ENCODE measurements at regions of chr16 and their contacts with region 1.

Region 1: GRCh38 chr16:27203429-27204231 is at the start of gene KDM8:
- DNase-seq: peak; percentile 99
- ATAC-seq: peak; percentile 91 to 95
- H3K4me3 ChIP-seq: peak within 1 kb of the TSS; percentile 67 to 79 (median 76)
- H3K27ac ChIP-seq: peak within 1 kb of the TSS; percentile 88 to 96 (median 94)
- H3K4me1 ChIP-seq: peaks cover 22 to 24% of the 10 kb centered on the region in 2 donors
- H3K27me3 ChIP-seq: no peaks in the 10 kb centered on the region
- CTCF ChIP-seq: no peak
- POLR2A ChIP-seq: peak; percentile 69 to 83
- total RNA-seq, gene KDM8: 3.2 to 6.3 (median 5.1) TPM

Region 2: GRCh38 chr16:27222249-27223225 is 18.9 kb after region 1 on chr16:
- in situ Hi-C with region 1: no loop called
- intact Hi-C with region 1: loop called (anchors 1 kb)
- DNase-seq: peak; percentile 40 to 59
- ATAC-seq: peak; percentile 66 to 71
- H3K4me3 ChIP-seq: peak overlapping the region in 3 of 4 donors; percentile 1 to 24 (median 9)
- H3K27ac ChIP-seq: peak overlapping the region; percentile 56 to 74 (median 65)
- H3K4me1 ChIP-seq: peaks cover 12 to 18% of the 10 kb centered on the region in 2 donors
- H3K27me3 ChIP-seq: no peaks in the 10 kb centered on the region
- CTCF ChIP-seq: no peak
- POLR2A ChIP-seq: no peak

Region 3: DNA sequence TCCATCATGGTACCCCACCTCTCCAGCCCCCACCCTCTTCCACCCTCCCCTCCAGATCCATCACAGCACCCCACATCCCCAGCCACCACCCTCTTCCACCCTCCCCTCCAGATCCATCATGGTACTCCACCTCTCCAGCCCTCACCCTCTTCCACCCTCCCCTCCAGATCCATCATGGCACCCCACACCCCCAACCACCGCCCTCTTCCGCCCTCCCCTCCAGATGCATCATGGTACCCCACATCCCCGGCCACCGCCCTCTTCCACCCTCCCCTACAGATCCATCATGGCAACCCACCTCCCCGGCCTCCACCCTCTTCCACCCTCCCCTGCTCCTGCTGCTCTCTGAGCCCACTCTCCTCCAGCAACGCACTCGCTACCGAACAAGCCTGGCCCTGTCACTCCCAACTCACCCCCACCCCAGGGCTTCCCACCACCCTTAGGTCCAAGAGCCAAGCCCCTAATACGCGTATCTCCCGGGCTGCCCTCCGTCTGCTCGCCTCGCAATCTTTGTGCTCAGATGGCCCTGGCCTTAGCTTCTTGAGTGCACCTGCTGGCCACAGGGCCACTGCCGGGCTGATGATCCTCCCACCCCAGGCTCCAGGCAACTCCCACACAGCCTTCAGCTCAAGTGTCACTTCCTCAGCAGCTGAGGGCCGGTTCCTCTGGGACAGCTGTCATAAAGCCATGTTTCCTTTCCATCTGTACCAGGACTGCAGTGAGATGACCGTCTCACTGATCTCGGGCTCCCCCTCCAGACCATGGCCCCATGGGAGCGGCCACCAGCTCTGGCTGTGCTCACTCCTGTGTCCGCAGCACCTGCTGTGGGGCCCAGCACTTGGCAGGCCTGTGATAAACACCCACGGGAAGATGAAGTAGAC is 25.2 kb after region 1 on chr16:
- in situ Hi-C with region 1: no loop called
- intact Hi-C with region 1: loop called (anchors 2 kb)
- DNase-seq: peak; percentile 67 to 88
- ATAC-seq: peak; percentile 96 to 98
- H3K4me3 ChIP-seq: no peak overlapping the region
- H3K27ac ChIP-seq: peak overlapping the region; percentile 48 to 72 (median 62)
- H3K4me1 ChIP-seq: peaks cover 15% of the 10 kb centered on the region in 2 donors
- H3K27me3 ChIP-seq: no peaks in the 10 kb centered on the region
- CTCF ChIP-seq: peak in 2 of 5 experiments; percentile 30 to 44
- POLR2A ChIP-seq: no peak

Region 4: DNA sequence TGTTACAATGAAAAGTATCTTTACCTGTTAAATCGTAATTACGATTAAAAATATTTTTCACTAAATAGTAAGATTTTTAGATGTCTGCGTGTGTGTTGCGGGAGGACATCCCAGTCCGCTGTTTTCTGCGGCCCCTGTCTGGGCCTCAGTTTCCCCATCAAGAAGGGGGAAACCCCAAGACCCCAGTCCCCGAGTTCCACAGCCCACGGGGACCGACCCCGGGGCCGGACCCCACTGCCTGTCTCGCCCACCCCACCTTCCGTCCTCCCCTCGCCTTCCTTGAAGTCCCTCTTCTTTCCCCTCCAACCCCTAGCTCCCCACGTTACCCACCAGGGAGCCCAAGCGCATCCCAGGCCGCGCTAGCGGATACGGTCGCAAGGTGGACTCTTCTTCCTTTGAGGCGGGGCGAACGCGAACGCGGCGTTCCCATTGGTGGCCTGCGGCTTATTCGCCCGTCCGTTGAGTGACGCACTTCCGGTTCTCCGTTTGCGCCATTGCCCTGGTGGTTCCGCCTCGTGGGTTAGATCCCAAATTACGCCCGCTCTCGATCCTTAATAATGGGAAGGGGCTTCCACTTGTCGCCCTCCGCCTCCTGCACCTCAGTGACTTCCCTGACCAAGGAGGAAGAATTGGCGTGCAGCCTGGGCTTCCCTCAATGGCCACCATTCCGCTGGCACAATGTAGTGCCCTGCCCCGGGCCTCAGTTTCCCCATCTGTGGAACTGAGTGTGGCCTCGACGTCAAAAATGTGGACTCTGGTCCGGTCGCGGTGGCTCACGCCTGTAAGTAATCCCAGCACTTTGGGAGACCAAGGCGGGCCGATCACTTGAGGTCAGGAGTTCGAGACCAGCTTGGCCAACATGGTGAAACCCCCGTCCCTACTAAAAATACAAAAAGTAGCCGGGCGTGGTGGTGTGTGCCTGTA is 65.0 kb after region 1 on chr16 and contains the start of gene NSMCE1:
- in situ Hi-C with region 1: no loop called
- intact Hi-C with region 1: loop called (anchors 2 kb)
- DNase-seq: peak; percentile 94 to 96
- ATAC-seq: peak; percentile 99 to 100
- H3K4me3 ChIP-seq: peak within 1 kb of the TSS; percentile 72 to 98 (median 84)
- H3K27ac ChIP-seq: peak within 1 kb of the TSS; percentile 66 to 90 (median 80)
- H3K4me1 ChIP-seq: peaks cover 0 to 8% of the 10 kb centered on the region in 2 donors
- H3K27me3 ChIP-seq: no peaks in the 10 kb centered on the region
- CTCF ChIP-seq: peak in 3 of 5 experiments; percentile 17 to 40 (median 30)
- POLR2A ChIP-seq: peak; percentile 53 to 65
- total RNA-seq, gene NSMCE1: 20.2 to 29.1 (median 22.0) TPM

Region 5: DNA sequence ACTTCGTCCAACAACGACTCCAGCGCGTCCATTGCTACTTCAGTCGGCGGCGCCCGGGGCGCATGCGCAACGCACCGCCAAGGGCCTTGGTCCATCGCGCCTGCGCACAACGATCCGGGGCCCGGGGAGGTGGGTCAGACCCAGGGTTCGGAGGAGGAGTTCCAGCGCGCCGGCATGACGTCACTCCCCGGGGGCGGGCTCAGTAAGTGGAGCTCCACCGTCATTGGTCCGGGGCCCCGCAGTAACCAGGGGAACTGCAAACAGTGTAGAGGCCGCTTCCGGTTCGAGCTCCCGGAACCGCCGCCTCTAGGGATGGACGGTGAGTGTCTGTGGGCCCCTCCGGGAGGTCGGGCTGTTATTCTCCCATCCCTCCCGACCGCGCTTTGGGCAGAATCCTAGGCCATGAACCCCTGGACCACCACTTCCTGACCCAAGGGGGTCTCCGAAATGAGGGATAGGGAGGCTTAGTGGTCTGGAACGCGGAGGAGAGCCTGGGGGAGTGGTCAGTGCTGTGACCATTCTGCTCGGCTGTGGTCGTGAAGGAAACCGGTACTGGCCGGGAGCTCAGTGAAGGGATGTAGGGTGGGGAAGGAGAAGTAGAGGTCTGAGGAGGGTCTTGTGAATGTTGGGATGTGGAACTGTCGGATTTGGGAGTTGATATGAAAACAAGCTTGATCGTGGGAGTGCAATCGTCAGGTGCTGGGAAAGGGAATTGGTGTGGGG is 346.4 kb after region 1 on chr16 and contains the starts of genes GTF3C1 and KATNIP:
- in situ Hi-C with region 1: loop called in 1 of 4 experiments (anchors 25 kb)
- intact Hi-C with region 1: loop called (anchors 5 kb)
- DNase-seq: peak; percentile 99 to 100
- ATAC-seq: peak; percentile 94 to 97
- H3K4me3 ChIP-seq: peak within 1 kb of the TSS; percentile 84 to 99 (median 98)
- H3K27ac ChIP-seq: peak within 1 kb of the TSS; percentile 83 to 91 (median 88)
- H3K4me1 ChIP-seq: peaks cover 35 to 36% of the 10 kb centered on the region in 2 donors
- H3K27me3 ChIP-seq: no peaks in the 10 kb centered on the region
- CTCF ChIP-seq: no peak
- POLR2A ChIP-seq: peak; percentile 82
- total RNA-seq, gene GTF3C1: 52.0 to 108 (median 67.8) TPM
- total RNA-seq, gene KATNIP: 6.3 to 12.1 (median 7.7) TPM

Region 6: DNA sequence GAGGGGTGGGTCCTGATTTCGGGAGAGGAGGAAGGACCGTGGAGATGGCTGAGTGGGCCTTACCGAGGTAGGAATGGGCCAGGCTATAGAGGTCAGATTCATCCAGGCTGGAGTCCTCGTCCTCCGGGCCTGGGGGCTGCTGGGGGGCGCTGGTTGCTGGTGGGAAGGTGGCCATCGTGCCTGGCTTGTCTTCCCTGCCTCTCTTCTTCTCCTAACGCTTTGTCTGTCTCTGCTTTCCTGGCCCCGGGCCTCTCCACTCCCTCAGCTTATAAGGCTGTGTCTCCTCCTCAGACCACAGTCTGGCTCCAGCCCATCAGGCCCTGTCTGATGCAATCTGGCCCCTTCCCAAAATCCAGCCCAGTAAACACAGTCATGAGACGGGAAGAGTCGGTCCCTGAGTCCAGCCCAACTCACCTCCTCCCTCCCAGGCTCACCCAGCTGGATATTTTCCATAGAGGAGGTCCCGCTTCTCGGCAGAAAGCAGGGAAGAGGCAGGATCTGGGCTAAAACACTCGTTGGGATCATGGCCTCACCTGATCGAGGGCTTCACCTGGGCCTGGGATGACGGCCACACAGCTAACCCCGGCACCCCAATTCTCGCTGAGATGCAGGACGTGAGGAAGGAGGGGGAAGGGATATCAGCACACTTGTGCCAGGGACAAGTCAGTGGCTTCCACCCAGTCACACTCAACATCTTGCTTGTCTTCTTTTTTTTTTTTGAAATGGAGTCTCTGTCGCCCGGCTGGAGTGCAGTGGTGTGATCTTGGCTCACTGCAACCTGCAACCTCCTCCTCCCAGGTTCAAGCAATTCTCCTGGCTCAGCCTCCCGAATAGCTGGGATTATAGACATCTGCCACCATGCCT is 1335.3 kb after region 1 on chr16 and contains the start of gene NUPR1:
- in situ Hi-C with region 1: no loop called
- intact Hi-C with region 1: loop called (anchors 10 kb)
- DNase-seq: peak; percentile 98 to 99
- ATAC-seq: peak; percentile 84 to 85
- H3K4me3 ChIP-seq: peak within 1 kb of the TSS; percentile 66 to 79 (median 68)
- H3K27ac ChIP-seq: peak within 1 kb of the TSS; percentile 98 to 99 (median 99)
- H3K4me1 ChIP-seq: peaks cover 22 to 35% of the 10 kb centered on the region in 2 donors
- H3K27me3 ChIP-seq: no peaks in the 10 kb centered on the region
- CTCF ChIP-seq: no peak
- POLR2A ChIP-seq: peak; percentile 91 to 96
- total RNA-seq, gene NUPR1: 18.7 to 44.3 (median 22.6) TPM